CD4-positive, alpha-beta memory T cell (primary cell): ENCODE measurements at regions of chr3 and their contacts with region 1.

Region 1: GRCh38 chr3:71512000-71512399 is 71.5 kb downstream of the FOXP1 start:
- DNase-seq: peak; percentile 63 to 67 (median 65)
- H3K4me3 ChIP-seq: no peak overlapping the region
- H3K4me3 Mint-ChIP-seq: peak overlapping the region in 1 of 8 donors; percentile 35
- H3K27ac ChIP-seq: no peak overlapping the region
- H3K27ac Mint-ChIP-seq: peak overlapping the region; percentile 67 to 92 (median 85)
- H3K4me1 ChIP-seq: peaks cover 27% of the 10 kb centered on the region
- H3K4me1 Mint-ChIP-seq: peaks cover 7 to 17% (median 14%) of the 10 kb centered on the region in 4 donors
- H3K27me3 ChIP-seq: no peaks in the 10 kb centered on the region
- H3K27me3 Mint-ChIP-seq: no peaks in the 10 kb centered on the region

Region 2: GRCh38 chr3:71006810-71007785 is 504.9 kb before region 1 on chr3:
- CTCF ChIA-PET with region 1: interaction called, 13 read pairs
- POLR2A ChIA-PET with region 1: no interaction called
- intact Hi-C with region 1: loop called (anchors 1 kb)
- DNase-seq: peak in 4 of 5 donors; percentile 40 to 45 (median 42)
- H3K4me3 ChIP-seq: no peak overlapping the region
- H3K4me3 Mint-ChIP-seq: peak overlapping the region in 2 of 8 donors; percentile 47 to 66
- H3K27ac ChIP-seq: peak overlapping the region; percentile 68
- H3K27ac Mint-ChIP-seq: peak overlapping the region; percentile 64 to 98 (median 88)
- H3K4me1 ChIP-seq: peaks cover 70% of the 10 kb centered on the region
- H3K4me1 Mint-ChIP-seq: peaks cover 50 to 81% (median 68%) of the 10 kb centered on the region in 4 donors
- H3K27me3 ChIP-seq: no peaks in the 10 kb centered on the region
- H3K27me3 Mint-ChIP-seq: no peaks in the 10 kb centered on the region

Region 3: GRCh38 chr3:71305231-71306206 is 206.5 kb before region 1 on chr3:
- CTCF ChIA-PET with region 1: interaction called, 5 read pairs
- POLR2A ChIA-PET with region 1: no interaction called
- intact Hi-C with region 1: loop called (anchors 5 kb)
- DNase-seq: peak in 2 of 5 donors; percentile 14 to 15
- H3K4me3 ChIP-seq: peak overlapping the region; percentile 21 to 30
- H3K4me3 Mint-ChIP-seq: peak overlapping the region; percentile 82 to 96 (median 88)
- H3K27ac ChIP-seq: peak overlapping the region; percentile 11
- H3K27ac Mint-ChIP-seq: peak overlapping the region; percentile 81 to 96 (median 88)
- H3K4me1 ChIP-seq: peaks cover 80% of the 10 kb centered on the region
- H3K4me1 Mint-ChIP-seq: peaks cover 62 to 92% (median 76%) of the 10 kb centered on the region in 4 donors
- H3K27me3 ChIP-seq: no peaks in the 10 kb centered on the region
- H3K27me3 Mint-ChIP-seq: no peaks in the 10 kb centered on the region

Region 4: DNA sequence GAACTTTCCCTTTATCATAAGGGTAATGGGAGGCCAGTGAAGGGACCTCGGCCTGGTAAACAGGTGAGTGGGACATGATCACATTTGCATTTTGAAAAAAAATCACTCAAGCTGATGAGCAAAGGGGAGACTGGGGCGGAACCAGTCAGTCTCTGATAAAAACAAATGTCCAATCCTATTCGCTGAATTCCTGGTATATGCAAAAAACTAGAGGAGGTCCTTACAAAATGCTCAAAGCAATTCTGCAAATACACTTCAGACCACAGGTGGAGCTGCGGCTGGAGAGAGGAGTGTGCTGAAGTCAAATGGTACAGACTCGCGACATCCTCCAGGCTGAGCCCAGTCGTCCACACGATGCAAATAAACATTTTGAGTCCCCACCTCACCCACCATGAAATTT is 95.1 kb before region 1 on chr3:
- CTCF ChIA-PET with region 1: interaction called, 10 read pairs
- POLR2A ChIA-PET with region 1: interaction called, 3 read pairs
- intact Hi-C with region 1: loop called (anchors 2 kb)
- DNase-seq: peak; percentile 33 to 55 (median 49)
- H3K4me3 ChIP-seq: no peak overlapping the region
- H3K4me3 Mint-ChIP-seq: peak overlapping the region in 7 of 8 donors; percentile 30 to 83 (median 63)
- H3K27ac ChIP-seq: no peak overlapping the region
- H3K27ac Mint-ChIP-seq: peak overlapping the region; percentile 75 to 95 (median 85)
- H3K4me1 ChIP-seq: peaks cover 77% of the 10 kb centered on the region
- H3K4me1 Mint-ChIP-seq: peaks cover 55 to 93% (median 74%) of the 10 kb centered on the region in 4 donors
- H3K27me3 ChIP-seq: no peaks in the 10 kb centered on the region
- H3K27me3 Mint-ChIP-seq: no peaks in the 10 kb centered on the region

Region 5: DNA sequence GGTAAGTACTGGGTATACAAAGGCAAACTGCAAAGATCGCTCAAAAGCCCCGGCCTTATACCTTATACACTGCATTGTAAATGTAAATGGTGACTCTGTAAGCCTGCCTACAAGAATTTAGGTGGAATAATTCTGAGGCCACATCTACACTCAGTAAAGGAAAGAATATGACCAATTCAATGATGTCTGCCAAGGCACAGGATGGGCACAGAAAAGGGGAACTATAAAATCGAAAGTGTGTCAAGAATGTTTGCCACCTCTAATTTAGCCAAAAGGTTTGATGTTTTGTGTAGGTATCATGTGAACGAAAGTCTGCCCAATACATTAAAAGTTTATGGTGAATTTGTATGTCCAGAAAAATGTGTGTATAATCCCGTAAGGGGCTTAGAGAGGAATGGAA is 24.6 kb before region 1 on chr3:
- CTCF ChIA-PET with region 1: interaction called, 15 read pairs
- POLR2A ChIA-PET with region 1: interaction called, 5 read pairs
- intact Hi-C with region 1: no loop called
- DNase-seq: no peak
- H3K4me3 ChIP-seq: peak overlapping the region in 1 of 2 donors; percentile 34
- H3K4me3 Mint-ChIP-seq: peak overlapping the region; percentile 80 to 91 (median 86)
- H3K27ac ChIP-seq: peak overlapping the region; percentile 69
- H3K27ac Mint-ChIP-seq: peak overlapping the region; percentile 86 to 97 (median 96)
- H3K4me1 ChIP-seq: peaks cover 96% of the 10 kb centered on the region
- H3K4me1 Mint-ChIP-seq: peaks cover 51 to 92% (median 73%) of the 10 kb centered on the region in 4 donors
- H3K27me3 ChIP-seq: no peaks in the 10 kb centered on the region
- H3K27me3 Mint-ChIP-seq: no peaks in the 10 kb centered on the region

Region 6: GRCh38 chr3:71532644-71533397 is 20.8 kb after region 1 on chr3:
- CTCF ChIA-PET with region 1: no interaction called
- POLR2A ChIA-PET with region 1: no interaction called
- intact Hi-C with region 1: no loop called
- DNase-seq: no peak
- H3K4me3 ChIP-seq: no peak overlapping the region
- H3K4me3 Mint-ChIP-seq: no peak overlapping the region
- H3K27ac ChIP-seq: no peak overlapping the region
- H3K27ac Mint-ChIP-seq: no peak overlapping the region
- H3K4me1 ChIP-seq: peaks cover 8% of the 10 kb centered on the region
- H3K4me1 Mint-ChIP-seq: peaks cover 8 to 17% (median 11%) of the 10 kb centered on the region in 4 donors
- H3K27me3 ChIP-seq: no peaks in the 10 kb centered on the region
- H3K27me3 Mint-ChIP-seq: no peaks in the 10 kb centered on the region

Region 7: DNA sequence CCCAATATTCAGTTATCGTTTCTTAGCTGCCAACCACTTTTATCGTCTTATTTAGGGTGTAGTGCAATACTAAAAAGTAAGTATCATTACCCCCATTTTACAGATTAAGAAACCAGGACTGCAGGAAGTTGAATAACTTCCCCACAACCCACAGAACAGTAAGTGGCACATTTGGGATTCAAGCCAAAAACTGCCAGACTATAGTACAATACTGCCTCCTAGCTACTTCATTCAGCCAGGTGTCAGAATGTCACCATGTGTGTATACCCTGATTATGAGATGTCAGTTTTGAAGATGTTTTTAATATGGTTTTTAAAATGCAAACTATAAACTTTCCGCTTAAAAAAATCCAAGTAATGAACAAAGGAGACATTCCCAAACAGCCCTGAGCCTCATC is 347.1 kb after region 1 on chr3:
- CTCF ChIA-PET with region 1: no interaction called
- POLR2A ChIA-PET with region 1: no interaction called
- intact Hi-C with region 1: loop called (anchors 2 kb)
- DNase-seq: peak; percentile 33 to 68 (median 64)
- H3K4me3 ChIP-seq: no peak overlapping the region
- H3K4me3 Mint-ChIP-seq: peak overlapping the region in 1 of 8 donors; percentile 21
- H3K27ac ChIP-seq: no peak overlapping the region
- H3K27ac Mint-ChIP-seq: peak overlapping the region in 1 of 7 donors; percentile 33
- H3K4me1 ChIP-seq: peaks cover 7% of the 10 kb centered on the region
- H3K4me1 Mint-ChIP-seq: peaks cover 5 to 11% (median 7%) of the 10 kb centered on the region in 4 donors
- H3K27me3 ChIP-seq: no peaks in the 10 kb centered on the region
- H3K27me3 Mint-ChIP-seq: peaks cover 17 to 26% of the 10 kb centered on the region in 2 donors

Region 8: GRCh38 chr3:72177083-72178050 is 665.4 kb after region 1 on chr3:
- CTCF ChIA-PET with region 1: no interaction called
- POLR2A ChIA-PET with region 1: no interaction called
- intact Hi-C with region 1: no loop called
- DNase-seq: no peak
- H3K4me3 ChIP-seq: no peak overlapping the region
- H3K4me3 Mint-ChIP-seq: peak overlapping the region in 2 of 8 donors; percentile 47 to 57
- H3K27ac ChIP-seq: no peak overlapping the region
- H3K27ac Mint-ChIP-seq: no peak overlapping the region
- H3K4me1 ChIP-seq: no peaks in the 10 kb centered on the region
- H3K4me1 Mint-ChIP-seq: peaks cover 0 to 6% (median 1%) of the 10 kb centered on the region in 4 donors
- H3K27me3 ChIP-seq: no peaks in the 10 kb centered on the region
- H3K27me3 Mint-ChIP-seq: peaks cover 14 to 19% of the 10 kb centered on the region in 2 donors

Region 9: DNA sequence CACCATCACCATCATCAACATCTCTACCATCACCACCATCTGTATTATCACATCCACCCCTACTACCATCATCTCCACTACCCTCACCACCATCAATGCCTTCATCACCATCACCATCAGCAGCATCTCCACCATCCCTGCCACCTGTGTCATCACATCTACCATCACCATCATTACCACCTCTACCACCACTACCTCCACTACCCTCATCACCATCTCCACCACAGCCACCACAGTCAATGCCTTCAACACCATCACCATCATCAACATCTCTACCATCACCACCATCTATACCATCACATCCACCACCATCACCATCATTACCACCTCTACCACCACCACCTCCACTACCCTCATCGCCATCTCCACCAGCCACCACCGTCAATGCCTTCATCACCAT is 1139.5 kb after region 1 on chr3:
- CTCF ChIA-PET with region 1: no interaction called
- POLR2A ChIA-PET with region 1: no interaction called
- intact Hi-C with region 1: no loop called
- DNase-seq: no peak
- H3K4me3 ChIP-seq: no peak overlapping the region
- H3K4me3 Mint-ChIP-seq: no peak overlapping the region
- H3K27ac ChIP-seq: no peak overlapping the region
- H3K27ac Mint-ChIP-seq: peak overlapping the region in 1 of 7 donors; percentile 4
- H3K4me1 ChIP-seq: no peaks in the 10 kb centered on the region
- H3K4me1 Mint-ChIP-seq: peaks cover 0 to 2% (median 0%) of the 10 kb centered on the region in 4 donors
- H3K27me3 ChIP-seq: no peaks in the 10 kb centered on the region
- H3K27me3 Mint-ChIP-seq: peaks cover 1 to 2% of the 10 kb centered on the region in 2 donors